CD4-positive, alpha-beta memory T cell (primary cell): ENCODE measurements at regions of chr2 and their contacts with region 1.

Region 1: GRCh38 chr2:39436592-39437510 is at the start of gene MAP4K3:
- DNase-seq: peak; percentile 54 to 69 (median 60)
- H3K4me3 ChIP-seq: peak within 1 kb of the TSS; percentile 87 to 95
- H3K4me3 Mint-ChIP-seq: peak within 1 kb of the TSS; percentile 88 to 95 (median 92)
- H3K27ac ChIP-seq: peak within 1 kb of the TSS; percentile 53
- H3K27ac Mint-ChIP-seq: peak within 1 kb of the TSS; percentile 50 to 93 (median 87)
- H3K4me1 ChIP-seq: peaks cover 49% of the 10 kb centered on the region
- H3K4me1 Mint-ChIP-seq: peaks cover 40 to 57% (median 49%) of the 10 kb centered on the region in 4 donors
- H3K27me3 ChIP-seq: no peaks in the 10 kb centered on the region
- H3K27me3 Mint-ChIP-seq: no peaks in the 10 kb centered on the region
- total RNA-seq, gene MAP4K3: 16.1 to 18.1 TPM

Region 2: DNA sequence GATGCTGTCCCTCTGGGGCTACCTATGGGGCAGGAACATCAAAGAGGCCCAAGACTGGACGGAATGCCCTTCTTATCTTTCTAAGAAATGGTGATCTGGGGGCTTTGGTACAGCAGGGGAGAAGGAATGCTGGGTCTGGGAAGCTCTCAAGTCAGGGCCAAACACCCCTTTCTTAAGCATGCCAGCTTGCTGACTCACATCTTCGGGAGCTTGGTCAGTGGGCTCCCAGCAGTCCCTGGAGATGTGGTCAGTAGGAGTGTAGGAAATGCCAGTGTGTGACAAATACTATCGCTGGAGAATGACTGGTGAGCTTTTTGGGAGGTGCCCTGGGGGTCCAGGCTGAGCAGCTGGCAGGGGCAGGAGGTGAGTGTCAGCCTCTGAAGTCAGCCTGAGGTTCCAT is 1660.4 kb before region 1 on chr2:
- CTCF ChIA-PET with region 1: no interaction called
- POLR2A ChIA-PET with region 1: no interaction called
- intact Hi-C with region 1: no loop called
- DNase-seq: no peak
- H3K4me3 ChIP-seq: no peak overlapping the region
- H3K4me3 Mint-ChIP-seq: no peak overlapping the region
- H3K27ac ChIP-seq: no peak overlapping the region
- H3K27ac Mint-ChIP-seq: no peak overlapping the region
- H3K4me1 ChIP-seq: no peaks in the 10 kb centered on the region
- H3K4me1 Mint-ChIP-seq: no peaks in the 10 kb centered on the region
- H3K27me3 ChIP-seq: no peaks in the 10 kb centered on the region
- H3K27me3 Mint-ChIP-seq: no peaks in the 10 kb centered on the region

Region 3: DNA sequence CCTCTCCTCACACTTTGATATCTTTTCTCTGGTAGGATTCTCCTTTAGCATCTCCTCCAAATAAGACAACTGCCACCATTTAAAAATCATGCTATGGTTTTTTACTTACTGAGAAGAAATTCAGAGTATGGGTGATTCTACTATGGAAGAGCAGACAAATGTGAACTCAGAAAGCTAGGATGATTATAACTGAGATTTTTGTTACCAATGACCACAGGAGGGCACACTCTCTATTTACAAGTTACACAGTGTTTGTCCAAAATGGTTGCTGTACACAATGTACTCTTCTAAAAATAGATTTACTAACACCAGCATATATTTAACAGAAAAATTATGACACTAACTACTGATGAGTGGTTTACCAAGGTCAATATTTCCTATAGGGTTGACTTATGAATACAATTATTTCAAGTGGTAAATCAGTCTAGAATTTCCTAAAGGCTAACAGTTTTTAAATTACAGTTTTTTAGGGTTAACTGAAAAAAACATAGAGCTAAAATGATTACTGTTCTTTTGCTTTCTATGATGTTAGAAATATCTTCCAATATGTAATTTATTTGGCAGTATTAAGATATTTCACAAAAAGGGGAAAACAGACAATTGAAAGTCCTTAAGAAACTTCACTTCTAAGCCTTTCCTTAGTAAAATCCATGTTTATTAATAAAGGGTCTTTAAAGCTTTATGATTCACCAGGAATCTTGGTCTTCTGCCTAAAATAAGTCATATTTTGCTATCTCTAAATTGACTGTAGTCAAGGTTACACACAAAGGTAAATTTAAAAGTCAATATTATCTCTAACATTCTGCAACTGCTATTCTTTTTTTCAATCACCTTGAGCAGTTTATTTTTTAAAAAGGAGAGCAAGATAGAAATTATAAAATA is 57.0 kb before region 1 on chr2:
- CTCF ChIA-PET with region 1: interaction called, 3 read pairs
- POLR2A ChIA-PET with region 1: no interaction called
- intact Hi-C with region 1: loop called (anchors 5 kb)
- DNase-seq: peak in 4 of 5 donors; percentile 6 to 23 (median 13)
- H3K4me3 ChIP-seq: no peak overlapping the region
- H3K4me3 Mint-ChIP-seq: no peak overlapping the region
- H3K27ac ChIP-seq: no peak overlapping the region
- H3K27ac Mint-ChIP-seq: peak overlapping the region in 1 of 7 donors; percentile 44
- H3K4me1 ChIP-seq: no peaks in the 10 kb centered on the region
- H3K4me1 Mint-ChIP-seq: peaks cover 4 to 17% (median 14%) of the 10 kb centered on the region in 4 donors
- H3K27me3 ChIP-seq: no peaks in the 10 kb centered on the region
- H3K27me3 Mint-ChIP-seq: no peaks in the 10 kb centered on the region

Region 4: GRCh38 chr2:39778962-39779851 is 342.4 kb after region 1 on chr2 and contains the start of gene THUMPD2:
- CTCF ChIA-PET with region 1: no interaction called
- POLR2A ChIA-PET with region 1: no interaction called
- intact Hi-C with region 1: loop called (anchors 5 kb)
- DNase-seq: peak; percentile 44 to 60 (median 56)
- H3K4me3 ChIP-seq: peak within 1 kb of the TSS; percentile 83 to 89
- H3K4me3 Mint-ChIP-seq: peak within 1 kb of the TSS; percentile 92 to 98 (median 94)
- H3K27ac ChIP-seq: peak within 1 kb of the TSS; percentile 53
- H3K27ac Mint-ChIP-seq: peak within 1 kb of the TSS; percentile 22 to 96 (median 90)
- H3K4me1 ChIP-seq: peaks cover 48% of the 10 kb centered on the region
- H3K4me1 Mint-ChIP-seq: peaks cover 37 to 59% (median 51%) of the 10 kb centered on the region in 4 donors
- H3K27me3 ChIP-seq: no peaks in the 10 kb centered on the region
- H3K27me3 Mint-ChIP-seq: no peaks in the 10 kb centered on the region
- total RNA-seq, gene THUMPD2: 7.2 to 11.6 TPM